Activated naive CD4-positive, alpha-beta T cell treated with anti-CD3 and anti-CD28 coated beads for 36 hours (primary cell): ENCODE measurements at regions of chr7 and their contacts with region 1.

Region 1: DNA sequence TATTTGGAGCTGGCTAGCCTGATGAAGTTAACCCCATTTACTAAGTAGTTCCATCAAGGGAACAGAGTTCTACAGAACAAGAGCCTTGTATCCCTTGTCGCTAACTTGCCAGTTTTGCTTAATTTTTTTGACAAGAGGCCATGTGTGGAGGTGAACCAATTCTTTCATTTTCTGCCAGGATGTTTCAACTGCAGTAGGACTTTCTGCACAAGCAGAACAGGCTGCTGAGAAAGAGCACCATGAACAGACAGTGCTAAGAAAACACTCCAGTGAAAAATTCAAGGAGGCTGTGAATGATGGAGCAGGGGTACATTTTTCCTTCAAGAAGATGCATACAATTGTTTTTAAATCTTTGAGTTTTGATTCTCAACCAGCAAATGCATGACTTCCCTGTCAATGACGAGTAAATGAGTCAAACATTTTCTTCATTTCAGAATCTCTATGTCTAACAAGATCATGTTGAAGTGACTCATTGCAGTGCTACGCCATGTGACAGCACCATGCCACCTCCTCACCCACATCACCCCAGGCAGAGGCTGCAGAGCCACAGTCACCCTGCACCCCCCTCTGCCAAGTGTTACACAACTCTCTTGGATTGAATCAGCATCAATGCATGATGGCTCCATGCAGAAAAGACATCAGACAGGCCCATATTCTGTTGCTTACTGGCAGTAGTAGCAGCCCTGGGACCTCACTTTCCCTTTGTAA is 193.1 kb downstream of the COBL start:
- DNase-seq: peak; percentile 94
- H3K4me3 Mint-ChIP-seq: no peak overlapping the region
- H3K27ac Mint-ChIP-seq: peak overlapping the region; percentile 95
- H3K4me1 Mint-ChIP-seq: peaks cover 36% of the 10 kb centered on the region
- H3K27me3 Mint-ChIP-seq: no peaks in the 10 kb centered on the region

Region 2: GRCh38 chr7:50068961-50069551 is 1054.4 kb before region 1 on chr7:
- CTCF ChIA-PET with region 1: no interaction called
- intact Hi-C with region 1: loop called (anchors 5 kb)
- DNase-seq: peak; percentile 52
- H3K4me3 Mint-ChIP-seq: peak overlapping the region; percentile 81
- H3K27ac Mint-ChIP-seq: peak overlapping the region; percentile 70
- H3K4me1 Mint-ChIP-seq: peaks cover 21% of the 10 kb centered on the region
- H3K27me3 Mint-ChIP-seq: no peaks in the 10 kb centered on the region

Region 3: DNA sequence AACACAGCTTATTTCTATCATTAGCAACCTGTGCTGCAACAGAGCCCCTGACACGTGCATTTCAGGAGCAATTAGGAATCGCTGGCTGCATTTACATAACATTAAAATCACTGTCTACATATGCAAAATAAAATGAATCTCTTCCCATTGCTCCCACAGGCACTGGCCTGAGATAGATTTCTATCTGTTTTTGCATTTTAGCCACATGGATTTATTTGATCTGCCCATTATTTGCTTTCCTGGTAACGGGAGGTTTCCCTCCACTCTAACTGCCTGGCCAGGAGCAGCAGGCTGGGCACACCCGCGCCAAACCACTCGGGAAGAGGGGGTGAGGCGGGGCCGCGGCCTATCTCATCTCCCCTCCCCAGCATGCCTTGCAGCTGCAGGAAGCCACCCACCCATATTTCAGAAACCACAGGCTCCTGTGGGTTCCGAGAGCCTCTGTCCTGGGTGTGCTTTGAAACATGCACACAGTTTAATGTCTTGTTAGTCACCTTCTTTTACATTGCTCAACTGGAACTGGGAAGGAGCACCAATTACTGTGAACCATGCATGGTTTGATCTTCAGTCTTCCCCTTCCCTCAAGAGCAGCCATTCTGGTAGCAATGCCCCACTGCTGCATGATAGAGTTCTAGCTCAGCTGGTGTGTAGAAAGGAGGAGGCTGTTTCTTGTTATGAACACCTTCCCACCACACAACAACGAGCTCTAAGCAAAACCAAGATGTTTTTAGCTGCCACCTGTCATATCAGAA is 856.7 kb before region 1 on chr7:
- CTCF ChIA-PET with region 1: no interaction called
- intact Hi-C with region 1: loop called (anchors 1 kb)
- DNase-seq: peak; percentile 84
- H3K4me3 Mint-ChIP-seq: peak overlapping the region; percentile 55
- H3K27ac Mint-ChIP-seq: peak overlapping the region; percentile 94
- H3K4me1 Mint-ChIP-seq: peaks cover 91% of the 10 kb centered on the region
- H3K27me3 Mint-ChIP-seq: no peaks in the 10 kb centered on the region

Region 4: GRCh38 chr7:50397320-50397970 is 726.0 kb before region 1 on chr7:
- CTCF ChIA-PET with region 1: no interaction called
- intact Hi-C with region 1: loop called (anchors 5 kb)
- DNase-seq: peak; percentile 60
- H3K4me3 Mint-ChIP-seq: no peak overlapping the region
- H3K27ac Mint-ChIP-seq: peak overlapping the region; percentile 78
- H3K4me1 Mint-ChIP-seq: peaks cover 81% of the 10 kb centered on the region
- H3K27me3 Mint-ChIP-seq: no peaks in the 10 kb centered on the region

Region 5: GRCh38 chr7:50664461-50664922 is 459.0 kb before region 1 on chr7:
- CTCF ChIA-PET with region 1: no interaction called
- intact Hi-C with region 1: loop called (anchors 1 kb)
- DNase-seq: peak; percentile 47
- H3K4me3 Mint-ChIP-seq: no peak overlapping the region
- H3K27ac Mint-ChIP-seq: no peak overlapping the region
- H3K4me1 Mint-ChIP-seq: peaks cover 62% of the 10 kb centered on the region
- H3K27me3 Mint-ChIP-seq: no peaks in the 10 kb centered on the region

Region 6: GRCh38 chr7:50826371-50827172 is 296.9 kb before region 1 on chr7:
- CTCF ChIA-PET with region 1: no interaction called
- intact Hi-C with region 1: loop called (anchors 1 kb)
- DNase-seq: peak; percentile 73
- H3K4me3 Mint-ChIP-seq: no peak overlapping the region
- H3K27ac Mint-ChIP-seq: peak overlapping the region; percentile 28
- H3K4me1 Mint-ChIP-seq: peaks cover 15% of the 10 kb centered on the region
- H3K27me3 Mint-ChIP-seq: peaks cover 2% of the 10 kb centered on the region

Region 7: DNA sequence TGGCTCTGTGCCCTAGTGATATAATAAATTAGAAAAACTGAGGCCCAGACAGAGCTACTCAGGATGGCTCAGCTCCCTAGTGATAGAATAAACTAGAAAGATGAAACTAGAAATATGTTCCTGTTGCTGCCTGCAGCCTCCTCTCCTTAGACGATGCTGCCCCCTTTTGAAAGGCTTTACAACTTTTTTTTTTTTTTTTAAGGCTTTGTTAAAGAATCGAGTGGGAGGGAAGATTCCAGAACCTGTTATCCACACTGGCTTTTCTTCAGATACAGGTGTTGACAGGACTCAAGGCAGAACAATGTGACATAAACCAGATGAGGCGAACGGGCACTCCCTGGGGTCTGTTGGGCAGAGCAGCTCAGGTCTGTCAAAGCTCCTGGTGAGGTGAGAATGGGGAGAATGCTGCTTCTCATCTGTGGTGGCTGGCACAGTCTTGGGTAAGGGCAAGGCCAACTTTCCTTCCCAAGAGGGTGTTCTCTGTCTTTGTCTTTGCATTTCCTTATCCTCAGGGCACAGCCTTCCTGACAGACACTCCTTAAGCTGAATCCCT is 18.1 kb after region 1 on chr7:
- CTCF ChIA-PET with region 1: interaction called, 9 read pairs
- intact Hi-C with region 1: loop called (anchors 1 kb)
- DNase-seq: peak; percentile 31
- H3K4me3 Mint-ChIP-seq: no peak overlapping the region
- H3K27ac Mint-ChIP-seq: no peak overlapping the region
- H3K4me1 Mint-ChIP-seq: peaks cover 14% of the 10 kb centered on the region
- H3K27me3 Mint-ChIP-seq: no peaks in the 10 kb centered on the region

Region 8: GRCh38 chr7:51315393-51316261 is 192.2 kb after region 1 on chr7:
- CTCF ChIA-PET with region 1: no interaction called
- intact Hi-C with region 1: no loop called
- DNase-seq: no peak
- H3K4me3 Mint-ChIP-seq: peak overlapping the region; percentile 34
- H3K27ac Mint-ChIP-seq: no peak overlapping the region
- H3K4me1 Mint-ChIP-seq: peaks cover 7% of the 10 kb centered on the region
- H3K27me3 Mint-ChIP-seq: peaks cover 40% of the 10 kb centered on the region